Activated CD4-positive, alpha-beta T cell treated with anti-CD3 and anti-CD28 coated beads, Interleukin-2, amount 10 ng/mL, durations not matched to agents 24 days and 14 days (primary cell): ENCODE measurements at regions of chr6 and their contacts with region 1.

Region 1: DNA sequence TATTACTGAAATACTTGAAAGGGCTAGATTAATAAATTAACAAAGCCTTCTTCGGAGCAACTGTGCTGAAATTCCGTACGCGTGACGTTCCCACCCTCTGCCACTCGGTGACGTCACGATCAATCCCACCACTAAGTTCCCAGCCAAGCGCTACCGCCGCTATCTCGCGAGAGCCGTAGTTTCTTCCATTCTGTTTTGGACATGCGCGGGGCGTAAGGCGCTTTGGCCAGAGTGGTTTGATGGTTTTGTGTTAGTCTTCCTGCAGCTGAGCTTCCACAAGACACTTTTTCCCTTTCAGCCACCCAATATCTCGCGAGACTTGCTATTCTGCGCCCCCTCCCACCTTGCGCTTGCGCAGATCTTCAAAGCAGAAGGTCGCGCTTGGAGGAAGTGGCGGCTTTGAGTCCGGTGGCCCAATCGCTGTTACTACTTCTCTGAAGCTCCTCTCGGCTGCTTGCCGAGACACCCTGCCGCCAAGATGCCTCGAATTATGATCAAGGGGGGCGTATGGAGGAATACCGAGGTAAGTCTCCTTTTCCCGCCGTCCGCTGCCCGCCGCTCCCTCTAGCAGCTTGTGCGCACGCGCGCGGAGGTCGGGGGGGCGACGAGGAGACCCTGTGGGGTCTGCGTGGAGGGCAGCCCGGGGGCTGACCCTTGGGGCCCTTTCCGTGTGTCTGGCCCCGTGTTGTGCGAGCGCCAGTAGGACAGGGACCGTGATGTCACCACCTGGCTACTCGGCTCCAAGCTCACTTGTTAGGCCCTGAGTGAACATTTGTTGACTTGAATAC is at the start of gene CDC5L:
- DNase-seq: peak; percentile 98
- H3K4me3 Mint-ChIP-seq: peak within 1 kb of the TSS; percentile 98
- H3K27ac Mint-ChIP-seq: peak within 1 kb of the TSS; percentile 98
- H3K4me1 Mint-ChIP-seq: peaks cover 32% of the 10 kb centered on the region
- H3K27me3 Mint-ChIP-seq: peaks cover 15% of the 10 kb centered on the region
- total RNA-seq, gene CDC5L: 25.5 and 26.5 TPM in 2 replicates

Region 2: GRCh38 chr6:44096612-44097011 is 290.9 kb before region 1 on chr6:
- intact Hi-C with region 1: no loop called
- DNase-seq: peak; percentile 92
- H3K4me3 Mint-ChIP-seq: no peak overlapping the region
- H3K27ac Mint-ChIP-seq: no peak overlapping the region
- H3K4me1 Mint-ChIP-seq: peaks cover 5% of the 10 kb centered on the region
- H3K27me3 Mint-ChIP-seq: no peaks in the 10 kb centered on the region

Region 3: DNA sequence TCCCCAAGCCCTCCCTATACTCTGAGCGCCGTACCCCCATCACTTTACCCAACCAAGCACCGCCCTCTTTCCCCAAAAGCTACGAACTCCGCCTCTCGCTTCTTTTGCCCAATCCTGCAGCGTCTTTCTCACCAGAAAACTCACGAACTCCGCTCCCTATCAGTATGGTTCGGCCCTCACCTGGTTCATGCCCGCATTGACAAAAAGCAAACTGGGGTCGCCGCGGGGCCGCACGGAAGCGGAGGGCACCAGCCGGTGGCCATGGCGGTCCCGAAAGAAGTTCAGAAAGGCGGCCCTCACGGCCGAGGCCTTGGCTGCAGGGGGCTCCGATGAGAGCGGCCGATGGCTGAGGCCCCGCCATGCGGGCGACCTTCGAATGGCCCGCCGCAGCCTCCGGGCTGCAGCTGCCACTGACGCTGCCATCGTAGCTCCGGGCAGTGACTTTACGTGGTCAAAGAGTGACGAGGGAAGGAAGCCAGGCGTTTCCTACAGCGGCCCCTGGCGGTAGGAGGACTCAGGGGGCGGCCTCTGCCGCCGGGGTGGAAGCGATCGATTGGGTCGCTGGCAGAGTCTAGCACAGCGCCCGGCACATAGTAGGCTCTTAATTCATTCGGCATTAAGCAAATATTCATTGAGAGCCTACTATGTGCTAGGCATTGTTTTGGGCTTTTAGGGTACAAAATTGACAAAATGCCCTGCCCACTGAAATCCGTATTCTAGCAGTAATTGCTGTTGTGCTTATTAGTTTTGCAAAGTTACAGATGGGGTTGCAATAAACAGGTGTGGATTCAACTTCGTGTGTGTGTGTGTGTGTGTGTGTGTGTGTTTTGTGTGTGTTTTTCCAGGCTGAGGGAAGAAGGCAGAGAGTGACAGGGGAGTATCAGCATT is 74.4 kb before region 1 on chr6 and contains the start of gene AARS2:
- intact Hi-C with region 1: loop called (anchors 2 kb)
- DNase-seq: peak; percentile 98
- H3K4me3 Mint-ChIP-seq: peak within 1 kb of the TSS; percentile 96
- H3K27ac Mint-ChIP-seq: peak within 1 kb of the TSS; percentile 97
- H3K4me1 Mint-ChIP-seq: peaks cover 16% of the 10 kb centered on the region
- H3K27me3 Mint-ChIP-seq: peaks cover 10% of the 10 kb centered on the region
- total RNA-seq, gene AARS2: 22.4 and 23.7 TPM in 2 replicates

Region 4: DNA sequence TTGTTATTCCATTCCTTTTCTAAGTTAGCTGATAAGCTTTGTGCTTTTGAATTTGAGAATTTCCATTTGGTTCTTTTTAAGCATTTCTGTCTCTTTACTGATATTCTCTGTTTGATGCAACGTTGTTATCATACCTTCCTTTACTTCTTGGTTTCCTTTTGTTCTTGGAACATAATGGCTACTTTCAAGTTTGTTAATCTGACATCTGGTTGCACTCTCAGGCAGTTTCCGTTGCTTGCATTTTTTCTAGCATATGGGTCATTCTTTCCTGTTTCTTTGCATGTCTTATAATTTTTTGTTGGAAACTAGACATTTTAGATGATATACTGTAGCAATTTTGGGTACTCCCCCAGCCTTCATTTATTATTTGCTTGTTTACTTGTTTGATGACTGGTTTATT is 12.5 kb after region 1 on chr6:
- intact Hi-C with region 1: loop called (anchors 1 kb)
- DNase-seq: no peak
- H3K4me3 Mint-ChIP-seq: peak overlapping the region; percentile 16
- H3K27ac Mint-ChIP-seq: peak overlapping the region; percentile 65
- H3K4me1 Mint-ChIP-seq: peaks cover 20% of the 10 kb centered on the region
- H3K27me3 Mint-ChIP-seq: no peaks in the 10 kb centered on the region